Endothelial cell of umbilical vein (primary cell): ENCODE measurements at regions of chr15 and their contacts with region 1.

Region 1: DNA sequence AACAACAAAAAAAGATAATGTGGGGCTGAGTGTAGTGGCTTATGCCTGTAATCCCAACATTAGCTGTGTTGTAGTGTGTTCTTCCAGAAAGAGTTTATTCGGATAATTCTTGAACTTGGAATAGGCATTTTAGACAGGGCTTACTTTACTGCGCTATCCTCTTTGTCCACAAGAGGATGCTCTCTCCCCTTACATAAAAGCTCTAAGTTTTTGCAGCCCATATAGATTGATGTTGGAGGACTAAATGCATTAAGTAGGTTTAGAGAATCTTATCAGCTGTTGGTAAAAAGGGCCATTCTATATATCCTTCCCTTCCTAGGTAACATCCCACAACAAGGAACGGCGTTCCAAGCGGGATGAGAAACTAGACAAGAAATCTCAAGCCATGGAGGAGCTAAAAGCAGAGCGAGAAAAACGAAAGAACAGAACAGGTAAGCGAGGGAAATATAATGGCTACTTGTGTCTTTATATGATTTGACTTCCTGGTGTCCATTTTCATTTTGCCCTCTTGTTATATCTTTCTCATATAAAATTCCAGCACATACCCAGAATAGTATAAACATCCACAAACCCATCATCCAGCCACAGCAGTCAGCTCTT is 27.8 kb upstream of the ITPKA start:
- DNase-seq: peak; percentile 75
- H3K4me3 ChIP-seq: no peak overlapping the region
- H3K27ac ChIP-seq: no peak overlapping the region
- H3K4me1 ChIP-seq: peaks cover 5% of the 10 kb centered on the region
- H3K27me3 ChIP-seq: no peaks in the 10 kb centered on the region
- CTCF ChIP-seq: peak; percentile 79 to 89
- POLR2A ChIP-seq: no peak

Region 2: DNA sequence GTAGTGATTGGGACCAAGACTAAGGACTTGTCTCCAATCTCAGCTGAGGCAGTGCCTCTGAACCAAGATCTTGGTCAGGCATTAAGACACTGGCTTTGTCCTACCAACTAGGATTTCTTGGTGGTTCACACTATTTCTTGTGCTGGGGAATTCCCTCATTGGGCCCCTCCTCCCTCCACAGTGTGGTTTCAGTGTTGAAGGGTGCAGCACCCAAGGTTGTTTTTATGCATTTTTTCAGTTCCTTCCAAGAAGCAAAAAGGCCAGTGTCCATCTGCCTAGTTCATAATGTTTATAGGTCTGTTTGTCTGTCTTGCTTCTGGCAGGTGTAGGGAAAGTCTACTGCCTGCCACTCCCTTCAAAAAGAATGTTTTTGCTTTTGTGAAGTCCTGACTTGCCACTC is 17.2 kb after region 1 on chr15:
- CTCF ChIA-PET with region 1: interaction called, 37 read pairs
- POLR2A ChIA-PET with region 1: interaction called, 3 read pairs
- dilution Hi-C with region 1: no loop called
- intact Hi-C with region 1: no loop called
- DNase-seq: no peak
- H3K4me3 ChIP-seq: no peak overlapping the region
- H3K27ac ChIP-seq: no peak overlapping the region
- H3K4me1 ChIP-seq: peaks cover 8% of the 10 kb centered on the region
- H3K27me3 ChIP-seq: no peaks in the 10 kb centered on the region
- CTCF ChIP-seq: no peak
- POLR2A ChIP-seq: no peak

Region 3: GRCh38 chr15:41512940-41513510 is 47.1 kb after region 1 on chr15:
- CTCF ChIA-PET with region 1: interaction called, 10 read pairs
- POLR2A ChIA-PET with region 1: no interaction called
- dilution Hi-C with region 1: no loop called
- intact Hi-C with region 1: no loop called
- DNase-seq: no peak
- H3K4me3 ChIP-seq: peak overlapping the region in 1 of 3 experiments; percentile 0
- H3K27ac ChIP-seq: no peak overlapping the region
- H3K4me1 ChIP-seq: peaks cover 8% of the 10 kb centered on the region
- H3K27me3 ChIP-seq: peaks cover 37% of the 10 kb centered on the region in 2 experiments
- CTCF ChIP-seq: no peak
- POLR2A ChIP-seq: no peak

Region 4: GRCh38 chr15:41557673-41558399 is 91.9 kb after region 1 on chr15:
- CTCF ChIA-PET with region 1: interaction called, 8 read pairs
- POLR2A ChIA-PET with region 1: no interaction called
- dilution Hi-C with region 1: no loop called
- intact Hi-C with region 1: loop called (anchors 5 kb)
- DNase-seq: peak; percentile 82
- H3K4me3 ChIP-seq: peak overlapping the region in 1 of 3 experiments; percentile 35
- H3K27ac ChIP-seq: no peak overlapping the region
- H3K4me1 ChIP-seq: peaks cover 22% of the 10 kb centered on the region
- H3K27me3 ChIP-seq: no peaks in the 10 kb centered on the region
- CTCF ChIP-seq: peak; percentile 90 to 91
- POLR2A ChIP-seq: no peak

Region 5: DNA sequence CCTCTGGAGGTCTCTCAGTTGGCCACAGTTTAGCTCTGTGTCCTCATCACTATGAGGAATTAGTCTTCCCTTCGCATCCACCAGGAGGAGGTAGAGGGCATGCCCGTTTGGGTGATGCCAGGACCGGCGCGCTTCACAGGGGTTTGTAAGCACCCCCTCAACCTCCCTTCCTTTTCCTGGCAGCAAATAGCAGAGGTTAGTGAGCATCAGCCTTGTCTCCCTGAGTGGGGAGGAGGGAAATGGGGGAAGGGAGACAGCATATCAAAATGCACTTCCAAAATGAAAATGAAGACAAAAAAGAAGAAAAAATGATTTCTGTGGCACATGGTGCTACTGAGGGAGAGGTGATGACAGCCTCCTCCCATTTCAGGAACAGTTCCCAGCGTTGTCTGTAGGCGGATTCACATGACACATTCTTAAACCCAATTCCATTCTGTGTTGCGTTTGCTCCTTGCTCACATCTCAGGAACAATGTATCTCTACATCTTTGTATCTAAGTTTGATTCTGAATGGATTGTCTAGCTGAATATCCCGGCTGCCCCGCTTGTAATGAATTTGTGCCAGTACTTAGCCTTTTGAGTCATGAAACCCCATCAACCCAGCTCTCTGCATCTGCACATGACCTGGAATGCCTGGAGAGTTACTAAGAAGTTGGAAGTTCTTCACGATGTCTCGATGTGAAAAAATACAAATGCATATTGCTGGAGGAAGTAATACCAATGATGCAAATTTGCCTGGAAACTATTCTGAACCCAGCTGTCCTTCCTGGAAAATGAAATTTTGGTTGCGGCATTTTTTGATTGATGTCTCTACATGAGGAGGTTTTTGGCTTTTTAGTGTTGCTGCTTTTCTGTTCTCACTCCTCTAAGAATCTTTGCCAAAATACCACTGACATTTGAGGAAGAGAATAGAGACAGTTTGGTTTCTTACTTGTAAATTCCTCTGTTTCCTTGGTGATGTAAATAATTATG is 138.3 kb after region 1 on chr15:
- CTCF ChIA-PET with region 1: interaction called, 32 read pairs
- POLR2A ChIA-PET with region 1: no interaction called
- dilution Hi-C with region 1: no loop called
- intact Hi-C with region 1: loop called (anchors 1 kb)
- DNase-seq: peak; percentile 74
- H3K4me3 ChIP-seq: peak overlapping the region in 1 of 3 experiments; percentile 15
- H3K27ac ChIP-seq: no peak overlapping the region
- H3K4me1 ChIP-seq: peaks cover 7% of the 10 kb centered on the region
- H3K27me3 ChIP-seq: peaks cover 3 to 8% of the 10 kb centered on the region in 2 experiments
- CTCF ChIP-seq: peak; percentile 76 to 80
- POLR2A ChIP-seq: no peak

Region 6: DNA sequence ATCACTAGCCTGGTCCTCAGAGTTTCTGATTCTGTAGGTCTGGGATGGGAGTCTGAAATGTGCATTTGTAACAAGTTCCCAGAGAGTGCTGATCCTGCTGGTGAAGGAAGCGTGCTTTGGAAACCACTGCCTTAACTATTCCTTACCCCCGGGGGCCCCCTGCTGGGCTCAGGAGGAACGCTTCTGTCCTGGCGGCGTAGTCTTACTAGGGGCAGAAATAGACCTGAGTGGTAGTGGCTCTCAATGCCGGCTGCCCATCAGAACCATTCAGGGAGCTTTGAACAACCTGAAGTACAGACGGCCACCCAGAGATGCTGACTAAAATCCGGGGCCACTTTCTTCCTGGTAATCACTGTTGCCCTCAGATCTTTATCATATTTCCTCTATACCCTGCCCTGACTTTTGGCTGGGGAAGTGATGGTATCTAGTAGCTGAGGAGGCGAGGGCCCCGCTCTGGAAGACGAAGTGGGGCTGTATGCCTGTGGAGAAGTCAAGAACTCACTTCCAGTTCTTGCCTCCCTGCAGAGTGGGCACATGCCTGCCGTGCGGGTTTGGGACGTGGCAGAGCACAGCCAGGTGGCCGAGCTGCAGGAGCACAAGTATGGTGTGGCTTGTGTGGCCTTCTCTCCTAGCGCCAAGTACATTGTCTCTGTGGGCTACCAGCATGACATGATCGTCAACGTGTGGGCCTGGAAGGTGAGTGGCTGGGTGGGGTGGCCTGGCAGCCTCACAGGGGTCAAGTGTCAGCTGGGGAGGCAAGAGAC is 345.7 kb after region 1 on chr15:
- CTCF ChIA-PET with region 1: interaction called, 15 read pairs
- POLR2A ChIA-PET with region 1: no interaction called
- dilution Hi-C with region 1: no loop called
- intact Hi-C with region 1: loop called (anchors 2 kb)
- DNase-seq: peak; percentile 84
- H3K4me3 ChIP-seq: no peak overlapping the region
- H3K27ac ChIP-seq: no peak overlapping the region
- H3K4me1 ChIP-seq: peaks cover 8% of the 10 kb centered on the region
- H3K27me3 ChIP-seq: no peaks in the 10 kb centered on the region
- CTCF ChIP-seq: peak; percentile 93 to 94
- POLR2A ChIP-seq: no peak